ENCODE measurements at regions of chr6 and their contacts with region 1.

Region 1: GRCh38 chr6:8006208-8006607 is 58.0 kb downstream of the BLOC1S5 start:
- DNase-seq: peak; percentile 27
- ATAC-seq: peak; percentile 60; the same call in 1 of the 2 replicates
- H3K4me3 ChIP-seq: no peak overlapping the region
- H3K27ac ChIP-seq: no peak overlapping the region
- H3K4me1 ChIP-seq: no peaks in the 10 kb centered on the region
- H3K27me3 ChIP-seq: no peaks in the 10 kb centered on the region
- CTCF ChIP-seq: peak; percentile 50 to 68 (median 55); a peak in 5 of 6 replicates
- POLR2A ChIP-seq: no peak
- RAD21 ChIP-seq: peak; percentile 75

Region 2: GRCh38 chr6:7624796-7625710 is 381.2 kb before region 1 on chr6:
- CTCF ChIA-PET with region 1: no interaction called
- POLR2A ChIA-PET with region 1: no interaction called
- RAD21 ChIA-PET with region 1: no interaction called
- intact Hi-C with region 1: loop called (anchors 10 kb)
- DNase-seq: no peak
- ATAC-seq: no peak
- H3K4me3 ChIP-seq: no peak overlapping the region
- H3K27ac ChIP-seq: no peak overlapping the region
- H3K4me1 ChIP-seq: no peaks in the 10 kb centered on the region
- H3K27me3 ChIP-seq: no peaks in the 10 kb centered on the region
- CTCF ChIP-seq: peak in 1 of 3 experiments; percentile 10; a peak in 1 of 6 replicates
- POLR2A ChIP-seq: no peak
- RAD21 ChIP-seq: peak; percentile 26; the same call in 1 of the 2 replicates

Region 3: GRCh38 chr6:7787137-7787608 is 219.0 kb before region 1 on chr6:
- CTCF ChIA-PET with region 1: no interaction called
- POLR2A ChIA-PET with region 1: no interaction called
- RAD21 ChIA-PET with region 1: no interaction called
- intact Hi-C with region 1: no loop called
- DNase-seq: no peak
- ATAC-seq: no peak
- H3K4me3 ChIP-seq: no peak overlapping the region
- H3K27ac ChIP-seq: no peak overlapping the region
- H3K4me1 ChIP-seq: no peaks in the 10 kb centered on the region
- H3K27me3 ChIP-seq: peaks cover 67% of the 10 kb centered on the region
- CTCF ChIP-seq: no peak
- POLR2A ChIP-seq: no peak
- RAD21 ChIP-seq: no peak

Region 4: GRCh38 chr6:8157839-8158238 is 151.6 kb after region 1 on chr6:
- CTCF ChIA-PET with region 1: no interaction called
- POLR2A ChIA-PET with region 1: no interaction called
- RAD21 ChIA-PET with region 1: no interaction called
- intact Hi-C with region 1: no loop called
- DNase-seq: no peak
- ATAC-seq: no peak
- H3K4me3 ChIP-seq: no peak overlapping the region
- H3K27ac ChIP-seq: no peak overlapping the region
- H3K4me1 ChIP-seq: no peaks in the 10 kb centered on the region
- H3K27me3 ChIP-seq: no peaks in the 10 kb centered on the region
- CTCF ChIP-seq: no peak
- POLR2A ChIP-seq: no peak
- RAD21 ChIP-seq: no peak